ENCODE measurements at regions of chr20 and their contacts with region 1.

Region 1: GRCh38 chr20:2859330-2860121 is 13.8 kb upstream of the PTPRA start:
- DNase-seq: no peak
- H3K4me3 ChIP-seq: no peak overlapping the region
- H3K27ac ChIP-seq: no peak overlapping the region
- H3K4me1 ChIP-seq: no peaks in the 10 kb centered on the region
- H3K27me3 ChIP-seq: no peaks in the 10 kb centered on the region
- CTCF ChIP-seq: no peak
- POLR2A ChIP-seq: no peak

Region 2: DNA sequence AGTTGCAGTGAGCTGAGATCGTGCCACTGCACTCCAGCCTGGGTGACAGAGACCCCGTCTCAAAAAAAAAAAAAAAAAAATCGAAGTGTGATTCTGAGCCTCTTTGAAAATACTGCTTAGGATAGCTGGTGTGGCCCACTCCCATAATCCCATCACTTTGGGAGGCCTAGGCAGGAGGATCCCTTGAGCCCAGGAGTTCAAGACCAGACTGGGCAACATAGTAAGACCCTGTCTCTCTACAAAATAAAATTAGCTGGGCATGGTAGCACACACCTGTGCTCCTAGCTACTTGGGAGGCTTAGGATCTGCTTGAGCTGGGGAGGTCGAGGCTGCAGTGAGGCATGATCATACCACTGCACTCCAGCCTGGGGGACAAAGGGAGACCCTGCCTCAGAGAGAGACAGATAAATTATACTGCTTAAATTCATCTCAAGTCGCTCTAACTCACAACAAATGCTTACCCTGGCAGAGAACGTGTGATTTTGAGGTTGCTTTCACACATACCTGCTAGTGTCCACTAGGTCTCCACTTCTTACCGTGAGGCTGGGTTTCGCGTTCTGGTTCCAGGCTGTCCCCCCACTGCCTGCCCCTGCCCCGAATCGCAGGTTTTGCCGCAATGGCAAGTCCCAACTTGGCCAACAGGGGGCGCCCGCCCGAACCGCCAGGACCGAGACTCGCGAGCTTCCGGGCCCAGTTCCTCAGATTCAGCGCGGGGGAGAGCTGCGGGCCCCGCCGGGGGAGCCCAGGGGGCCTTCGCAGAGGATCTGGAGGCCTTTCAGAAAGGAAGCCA is 335.4 kb before region 1 on chr20:
- intact Hi-C with region 1: loop called (anchors 10 kb)
- DNase-seq: peak; percentile 79
- H3K4me3 ChIP-seq: peak overlapping the region; percentile 50 to 67
- H3K27ac ChIP-seq: peak overlapping the region; percentile 60 to 81
- H3K4me1 ChIP-seq: no peaks in the 10 kb centered on the region
- H3K27me3 ChIP-seq: no peaks in the 10 kb centered on the region
- CTCF ChIP-seq: peak; percentile 82 to 95 (median 92)
- POLR2A ChIP-seq: peak; percentile 69

Region 3: DNA sequence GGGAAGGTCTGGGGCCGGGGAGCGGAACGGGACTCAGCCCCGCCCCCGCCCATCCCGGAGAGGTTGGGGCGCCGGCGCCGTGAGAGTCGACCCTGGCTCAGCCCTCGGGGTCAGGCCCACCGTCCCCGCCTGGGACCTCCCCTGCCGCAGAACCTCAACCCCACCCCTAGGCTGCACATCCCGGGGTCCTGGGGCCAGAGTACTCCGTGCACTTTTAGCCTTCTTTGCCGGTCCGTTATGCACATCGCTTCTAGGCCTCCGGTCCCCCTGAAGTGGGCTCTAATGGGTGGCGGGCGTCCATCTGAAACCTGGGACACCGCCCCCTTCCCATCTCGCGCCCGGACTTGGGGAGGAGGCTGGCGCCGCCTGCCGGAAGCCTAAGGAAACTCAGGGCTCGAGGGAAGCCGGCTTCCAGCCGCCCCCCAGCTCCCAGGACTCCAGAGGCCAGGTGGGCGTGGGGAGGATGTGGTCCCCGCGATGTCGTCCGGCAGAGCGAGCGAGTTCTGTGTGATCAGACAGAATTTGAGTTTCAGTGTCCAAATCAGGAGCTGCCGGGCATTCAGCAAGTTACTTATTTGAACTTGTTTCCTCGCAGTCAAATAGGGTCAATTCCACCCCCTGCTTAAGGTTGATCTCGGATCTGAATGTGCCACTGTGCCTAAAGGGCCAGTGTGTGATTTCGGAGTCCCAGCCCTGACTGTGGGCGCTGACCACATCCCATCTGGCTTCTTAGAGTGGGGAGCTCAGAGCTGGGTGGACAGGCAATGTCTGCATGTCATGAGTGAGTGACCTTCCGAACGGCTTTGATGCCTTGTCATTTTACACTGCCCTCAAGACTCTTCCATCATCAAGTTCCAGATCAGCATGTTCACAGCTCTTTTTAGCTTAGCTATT is 106.7 kb before region 1 on chr20:
- intact Hi-C with region 1: no loop called
- DNase-seq: no peak
- H3K4me3 ChIP-seq: peak overlapping the region; percentile 40 to 55
- H3K27ac ChIP-seq: peak overlapping the region; percentile 78 to 92
- H3K4me1 ChIP-seq: peaks cover 17% of the 10 kb centered on the region
- H3K27me3 ChIP-seq: no peaks in the 10 kb centered on the region
- CTCF ChIP-seq: peak; percentile 46 to 79 (median 58)
- POLR2A ChIP-seq: no peak

Measured in prostate gland (tissue), 2 donors.